ENCODE measurements at regions of chr14 and their contacts with region 1.

Region 1: DNA sequence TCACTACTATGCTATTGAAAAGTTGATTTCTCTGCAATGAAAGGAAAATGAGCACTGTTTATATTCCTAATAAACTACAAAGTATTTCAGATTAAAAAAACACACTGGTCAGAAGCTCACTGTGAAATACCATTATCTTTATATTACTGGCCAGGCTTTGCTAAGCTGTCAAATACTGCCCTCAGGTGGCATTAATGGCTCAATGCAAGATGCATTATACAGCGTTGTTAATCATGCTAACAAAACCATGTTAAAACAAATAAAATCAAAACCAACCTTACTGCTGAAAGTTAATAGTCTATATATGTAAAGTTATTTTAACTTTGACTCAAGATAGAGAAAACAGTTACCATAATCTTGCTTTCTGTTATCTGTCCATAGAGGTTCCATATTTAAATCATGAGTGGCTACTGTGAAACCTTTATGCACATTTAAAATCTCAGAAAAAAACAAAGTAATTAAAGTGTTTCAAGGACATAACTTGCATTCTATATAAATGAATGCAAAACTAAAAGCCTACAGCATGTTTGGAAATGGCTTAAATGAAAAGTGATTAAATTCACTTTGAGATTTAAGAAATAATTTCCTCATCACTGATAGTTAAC is 121.7 kb downstream of the RALGAPA1 start:
- DNase-seq: peak; percentile 80
- ATAC-seq: peak; percentile 93
- H3K4me3 ChIP-seq: no peak overlapping the region
- H3K27ac ChIP-seq: no peak overlapping the region
- H3K4me1 ChIP-seq: no peaks in the 10 kb centered on the region
- H3K27me3 ChIP-seq: no peaks in the 10 kb centered on the region
- CTCF ChIP-seq: peak; percentile 97

Region 2: GRCh38 chr14:35229495-35230089 is 457.8 kb before region 1 on chr14:
- CTCF ChIA-PET with region 1: no interaction called
- POLR2A ChIA-PET with region 1: no interaction called
- intact Hi-C with region 1: loop called (anchors 10 kb)
- DNase-seq: peak; percentile 61
- ATAC-seq: peak; percentile 84
- H3K4me3 ChIP-seq: no peak overlapping the region
- H3K27ac ChIP-seq: no peak overlapping the region
- H3K4me1 ChIP-seq: no peaks in the 10 kb centered on the region
- H3K27me3 ChIP-seq: no peaks in the 10 kb centered on the region
- CTCF ChIP-seq: peak; percentile 75

Region 3: DNA sequence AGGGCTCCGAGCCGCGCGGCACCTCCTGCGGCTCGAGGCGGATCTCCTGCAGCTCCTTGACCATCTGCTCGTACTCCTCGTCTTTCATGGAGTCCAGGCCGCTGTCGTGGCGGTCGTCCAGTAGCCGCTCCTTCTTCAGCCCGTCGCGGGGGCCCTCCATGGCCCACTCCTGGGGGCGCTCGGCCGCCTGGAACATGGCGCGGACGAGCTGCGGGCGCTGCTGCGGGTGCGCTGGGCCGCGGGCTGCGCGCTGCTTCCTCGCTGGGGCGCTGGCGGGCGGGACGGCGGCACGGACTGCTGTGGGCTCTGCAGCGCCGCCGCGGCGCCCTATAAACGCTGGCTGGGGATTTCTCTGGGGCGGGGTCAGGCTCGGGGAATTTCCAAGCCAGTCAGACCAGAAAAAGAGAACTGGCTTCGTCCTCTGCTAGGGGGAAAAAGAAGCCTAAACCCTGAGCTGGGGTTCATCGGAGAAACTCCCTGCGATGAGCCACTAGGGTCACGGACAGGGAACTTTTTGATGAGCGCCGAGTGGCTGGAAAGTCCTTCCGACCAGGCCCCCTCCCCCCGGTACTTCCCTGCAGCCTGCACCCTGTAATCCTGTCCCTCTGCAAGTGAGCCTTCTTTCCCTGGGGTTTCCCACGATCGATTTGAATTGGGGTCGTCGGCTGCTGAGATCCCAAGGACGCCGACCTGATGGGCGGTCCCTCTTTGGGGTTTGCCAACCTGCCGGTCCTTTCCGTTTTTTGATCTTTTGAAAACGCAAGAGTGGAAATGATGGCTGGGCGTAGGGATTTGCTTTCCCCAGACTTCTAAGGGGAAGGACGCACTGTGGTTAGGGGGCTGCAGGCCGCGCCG is 282.8 kb before region 1 on chr14 and contains the start of gene NFKBIA:
- CTCF ChIA-PET with region 1: no interaction called
- POLR2A ChIA-PET with region 1: no interaction called
- intact Hi-C with region 1: no loop called
- DNase-seq: peak; percentile 90
- ATAC-seq: peak; percentile 73
- H3K4me3 ChIP-seq: peak within 1 kb of the TSS; percentile 92
- H3K27ac ChIP-seq: peak within 1 kb of the TSS; percentile 91
- H3K4me1 ChIP-seq: peaks cover 34% of the 10 kb centered on the region
- H3K27me3 ChIP-seq: no peaks in the 10 kb centered on the region
- CTCF ChIP-seq: peak; percentile 55
- total RNA-seq, gene NFKBIA: 186 and 226 TPM in 2 replicates

Region 4: DNA sequence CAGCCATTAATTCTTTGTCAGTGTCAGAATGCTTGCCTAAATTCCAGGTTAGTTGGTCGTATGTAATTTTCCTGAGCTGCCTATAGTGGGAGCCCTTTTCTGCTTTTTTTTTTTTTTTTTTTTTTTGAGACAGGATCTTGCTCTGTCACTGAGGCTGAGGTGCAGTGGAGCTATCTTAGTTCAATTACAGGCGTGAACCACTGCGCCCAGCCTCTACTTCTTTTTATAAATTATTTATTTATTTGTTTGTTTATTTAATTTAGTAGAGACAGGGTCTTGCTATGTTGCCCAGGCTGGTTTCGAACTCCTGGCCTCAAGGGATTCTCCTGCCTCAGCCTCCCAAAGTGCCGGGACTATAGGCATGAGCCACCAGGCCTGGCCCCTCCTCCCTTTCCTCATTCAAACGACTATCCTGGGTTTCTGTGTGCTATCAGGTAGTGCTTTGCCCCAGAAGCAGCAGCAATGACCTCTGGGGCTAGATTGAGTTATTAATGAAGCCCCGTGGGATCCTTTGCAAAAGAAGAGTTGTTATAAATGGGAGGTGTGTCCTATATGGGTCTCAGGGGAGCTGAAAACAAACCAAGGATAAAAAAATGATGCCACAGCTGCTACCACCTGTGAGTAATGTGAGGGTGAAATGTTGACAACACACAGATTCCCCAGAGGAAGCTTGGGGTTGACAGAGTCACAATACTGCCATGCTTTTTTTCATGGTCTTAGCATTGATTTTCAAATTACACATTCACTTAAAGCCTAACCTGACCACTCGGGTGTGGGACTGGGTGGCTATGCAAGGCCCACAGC is 248.3 kb before region 1 on chr14:
- CTCF ChIA-PET with region 1: interaction called, 10 read pairs
- POLR2A ChIA-PET with region 1: no interaction called
- intact Hi-C with region 1: loop called (anchors 1 kb)
- DNase-seq: peak; percentile 37
- ATAC-seq: no peak; the same call in 1 of the 2 replicates
- H3K4me3 ChIP-seq: no peak overlapping the region
- H3K27ac ChIP-seq: no peak overlapping the region
- H3K4me1 ChIP-seq: no peaks in the 10 kb centered on the region
- H3K27me3 ChIP-seq: no peaks in the 10 kb centered on the region
- CTCF ChIP-seq: peak; percentile 60

Region 5: DNA sequence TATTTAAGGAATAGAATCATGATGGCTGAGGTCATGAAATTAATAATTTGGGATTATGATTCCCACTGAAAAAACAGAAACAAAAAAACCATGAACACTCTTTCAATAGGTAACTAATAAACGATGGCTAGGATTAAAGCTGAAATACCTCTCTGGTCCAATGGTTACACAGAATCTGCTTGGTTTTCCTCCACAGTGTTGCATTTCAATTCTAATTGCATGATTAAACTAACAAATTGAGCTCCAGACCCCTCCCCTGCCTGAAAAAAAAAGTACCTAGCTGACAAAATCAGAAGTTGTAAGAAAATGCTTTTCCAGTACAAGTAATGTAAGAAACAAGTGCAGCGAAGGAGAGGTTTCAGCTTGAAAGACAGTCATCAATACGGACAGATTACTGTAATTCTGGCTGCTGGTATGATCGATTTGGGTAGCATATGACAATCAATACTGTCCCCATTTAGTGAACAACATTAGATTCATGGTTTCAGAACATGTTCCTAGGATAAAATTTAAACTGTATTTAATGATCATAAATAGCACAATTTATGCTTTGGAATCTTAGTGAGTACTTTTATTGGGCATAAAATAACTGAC is 121.5 kb before region 1 on chr14:
- CTCF ChIA-PET with region 1: no interaction called
- POLR2A ChIA-PET with region 1: no interaction called
- intact Hi-C with region 1: loop called (anchors 10 kb)
- DNase-seq: no peak
- ATAC-seq: no peak
- H3K4me3 ChIP-seq: no peak overlapping the region
- H3K27ac ChIP-seq: no peak overlapping the region
- H3K4me1 ChIP-seq: no peaks in the 10 kb centered on the region
- H3K27me3 ChIP-seq: no peaks in the 10 kb centered on the region
- CTCF ChIP-seq: no peak

Region 6: GRCh38 chr14:35708073-35708472 is 20.6 kb after region 1 on chr14:
- CTCF ChIA-PET with region 1: no interaction called
- POLR2A ChIA-PET with region 1: no interaction called
- intact Hi-C with region 1: no loop called
- DNase-seq: no peak
- ATAC-seq: no peak
- H3K4me3 ChIP-seq: no peak overlapping the region
- H3K27ac ChIP-seq: no peak overlapping the region
- H3K4me1 ChIP-seq: no peaks in the 10 kb centered on the region
- H3K27me3 ChIP-seq: no peaks in the 10 kb centered on the region
- CTCF ChIP-seq: no peak

Region 7: GRCh38 chr14:35776823-35777222 is 89.4 kb after region 1 on chr14:
- CTCF ChIA-PET with region 1: no interaction called
- POLR2A ChIA-PET with region 1: no interaction called
- intact Hi-C with region 1: no loop called
- DNase-seq: no peak
- ATAC-seq: no peak
- H3K4me3 ChIP-seq: no peak overlapping the region
- H3K27ac ChIP-seq: no peak overlapping the region
- H3K4me1 ChIP-seq: no peaks in the 10 kb centered on the region
- H3K27me3 ChIP-seq: no peaks in the 10 kb centered on the region
- CTCF ChIP-seq: no peak

Measured in PC-3 (cell line).